CD8-positive, alpha-beta T cell (primary cell): ENCODE measurements at regions of chr19 and their contacts with region 1.

Region 1: GRCh38 chr19:49640113-49640898 is at the start of gene RRAS:
- DNase-seq: peak; percentile 98 to 100 (median 99)
- ATAC-seq: peak; percentile 66
- H3K4me3 ChIP-seq: peak within 1 kb of the TSS; percentile 64 to 75
- H3K4me3 Mint-ChIP-seq: peak within 1 kb of the TSS; percentile 95
- H3K27ac ChIP-seq: peak within 1 kb of the TSS; percentile 64 to 98
- H3K27ac Mint-ChIP-seq: peak within 1 kb of the TSS; percentile 96
- H3K4me1 ChIP-seq: peaks cover 51% of the 10 kb centered on the region
- H3K4me1 Mint-ChIP-seq: peaks cover 58% of the 10 kb centered on the region
- H3K27me3 ChIP-seq: no peaks in the 10 kb centered on the region
- H3K27me3 Mint-ChIP-seq: no peaks in the 10 kb centered on the region
- CTCF ChIP-seq: no peak
- total RNA-seq, gene RRAS: 3.6 to 4.9 TPM

Region 2: DNA sequence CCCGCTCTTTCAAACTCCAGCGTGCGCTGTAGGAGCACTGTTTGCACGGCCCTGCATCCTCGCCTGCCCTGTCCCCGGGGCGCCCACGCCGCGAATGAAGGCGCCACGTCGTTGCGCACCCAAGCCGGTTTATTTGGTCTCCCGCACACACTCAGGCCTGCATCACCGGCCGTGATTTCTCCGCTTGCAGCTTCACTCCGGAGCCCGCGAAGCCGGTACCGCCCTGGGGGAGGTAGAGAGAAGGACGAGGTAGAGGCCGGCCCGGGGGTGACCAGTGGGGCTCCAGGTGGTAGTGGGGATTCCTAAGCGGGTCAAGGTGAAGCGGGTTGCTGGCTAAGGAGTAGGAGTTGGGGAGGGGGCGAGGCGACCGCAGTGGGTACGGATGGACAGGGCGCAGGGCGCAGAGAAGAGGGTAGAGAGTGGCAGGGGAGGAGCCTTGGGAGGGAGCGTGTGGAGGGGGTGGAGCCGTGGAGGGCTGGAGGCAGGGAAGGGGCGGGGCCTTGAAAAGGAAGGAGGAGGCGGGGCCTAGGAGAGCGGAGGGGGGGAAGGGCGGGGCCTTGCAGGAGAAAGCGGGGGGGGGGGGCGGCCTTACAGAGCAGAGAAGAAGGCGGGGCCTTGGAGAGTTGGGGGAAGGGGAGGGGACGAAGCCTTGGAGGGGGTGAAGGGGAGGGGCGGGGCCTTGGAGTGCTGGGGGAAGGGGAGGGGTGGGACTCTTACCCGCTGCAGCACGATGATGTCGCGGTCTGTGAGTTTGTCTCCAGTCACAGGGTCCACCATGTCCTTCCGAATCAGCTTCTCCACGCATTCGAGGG is 84.5 kb before region 1 on chr19:
- CTCF ChIA-PET with region 1: no interaction called
- POLR2A ChIA-PET with region 1: no interaction called
- intact Hi-C with region 1: no loop called
- DNase-seq: peak; percentile 66 to 90 (median 77)
- ATAC-seq: peak; percentile 75
- H3K4me3 ChIP-seq: peak overlapping the region; percentile 59 to 78
- H3K4me3 Mint-ChIP-seq: peak overlapping the region; percentile 58
- H3K27ac ChIP-seq: peak overlapping the region; percentile 28 to 34
- H3K27ac Mint-ChIP-seq: peak overlapping the region; percentile 95
- H3K4me1 ChIP-seq: peaks cover 88% of the 10 kb centered on the region
- H3K4me1 Mint-ChIP-seq: peaks cover 74% of the 10 kb centered on the region
- H3K27me3 ChIP-seq: no peaks in the 10 kb centered on the region
- H3K27me3 Mint-ChIP-seq: no peaks in the 10 kb centered on the region
- CTCF ChIP-seq: no peak

Region 3: GRCh38 chr19:49580264-49581006 is 59.9 kb before region 1 on chr19 and contains the start of gene NOSIP:
- CTCF ChIA-PET with region 1: no interaction called
- POLR2A ChIA-PET with region 1: interaction called, 5 read pairs
- intact Hi-C with region 1: loop called (anchors 1 kb)
- DNase-seq: peak; percentile 93 to 98 (median 97)
- ATAC-seq: peak; percentile 97
- H3K4me3 ChIP-seq: peak within 1 kb of the TSS; percentile 68 to 71
- H3K4me3 Mint-ChIP-seq: peak within 1 kb of the TSS; percentile 95
- H3K27ac ChIP-seq: peak within 1 kb of the TSS; percentile 63 to 66
- H3K27ac Mint-ChIP-seq: peak within 1 kb of the TSS; percentile 94
- H3K4me1 ChIP-seq: peaks cover 22% of the 10 kb centered on the region
- H3K4me1 Mint-ChIP-seq: peaks cover 39% of the 10 kb centered on the region
- H3K27me3 ChIP-seq: no peaks in the 10 kb centered on the region
- H3K27me3 Mint-ChIP-seq: no peaks in the 10 kb centered on the region
- CTCF ChIP-seq: no peak
- total RNA-seq, gene NOSIP: 103 to 110 TPM

Region 4: DNA sequence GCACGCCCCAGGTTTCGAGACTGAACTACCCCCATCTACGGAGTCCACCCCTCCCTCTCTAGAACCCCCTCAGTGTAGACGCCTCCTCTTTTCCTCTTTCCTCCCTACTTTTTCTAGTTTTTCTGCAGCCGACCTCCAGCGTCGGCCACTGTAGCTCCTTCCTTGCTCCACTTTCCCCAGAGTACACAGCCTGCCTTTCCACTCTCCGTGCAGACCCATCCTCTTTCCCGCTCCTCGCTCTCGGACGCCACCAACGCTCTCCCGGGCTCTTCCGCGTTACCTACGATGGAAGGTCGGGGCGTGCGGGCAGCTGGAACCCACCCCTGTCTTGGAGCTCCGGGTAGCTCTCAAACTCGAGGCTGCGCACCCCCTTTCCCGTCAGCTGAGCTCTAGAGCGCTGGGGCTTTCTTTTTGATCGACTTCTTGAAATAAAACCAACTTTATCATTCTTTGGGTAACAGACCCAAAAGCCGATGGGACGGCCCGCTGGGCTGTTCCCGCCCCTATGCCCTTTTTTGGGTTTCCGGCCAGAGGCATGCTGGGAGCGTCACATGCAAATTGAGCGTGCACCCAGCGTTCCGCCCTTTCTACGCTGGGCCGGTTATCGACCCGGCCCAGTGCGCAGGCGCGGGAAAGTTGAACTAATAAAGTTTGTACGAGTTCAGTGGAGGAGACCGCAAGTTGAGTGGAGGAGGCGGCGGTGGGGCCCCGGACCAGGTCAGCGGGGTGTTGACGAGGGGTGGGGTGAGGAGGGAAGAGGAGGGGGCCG is 25.2 kb after region 1 on chr19 and contains the starts of genes BCL2L12 and IRF3:
- CTCF ChIA-PET with region 1: interaction called, 3 read pairs
- POLR2A ChIA-PET with region 1: interaction called, 34 read pairs
- intact Hi-C with region 1: loop called (anchors 1 kb)
- DNase-seq: peak; percentile 98 to 100 (median 99)
- ATAC-seq: peak; percentile 80
- H3K4me3 ChIP-seq: peak within 1 kb of the TSS; percentile 86 to 95
- H3K4me3 Mint-ChIP-seq: peak within 1 kb of the TSS; percentile 99
- H3K27ac ChIP-seq: peak within 1 kb of the TSS; percentile 77 to 93
- H3K27ac Mint-ChIP-seq: peak within 1 kb of the TSS; percentile 99
- H3K4me1 ChIP-seq: peaks cover 29% of the 10 kb centered on the region
- H3K4me1 Mint-ChIP-seq: peaks cover 38% of the 10 kb centered on the region
- H3K27me3 ChIP-seq: no peaks in the 10 kb centered on the region
- H3K27me3 Mint-ChIP-seq: no peaks in the 10 kb centered on the region
- CTCF ChIP-seq: no peak
- total RNA-seq, gene BCL2L12: 13.1 to 14.7 TPM
- total RNA-seq, gene IRF3: 92.0 to 99.5 TPM

Region 5: GRCh38 chr19:49718511-49718910 is 78.2 kb after region 1 on chr19:
- CTCF ChIA-PET with region 1: no interaction called
- POLR2A ChIA-PET with region 1: no interaction called
- intact Hi-C with region 1: loop called in 1 of 2 experiments (anchors 2 kb)
- DNase-seq: no peak
- ATAC-seq: no peak
- H3K4me3 ChIP-seq: no peak overlapping the region
- H3K4me3 Mint-ChIP-seq: peak overlapping the region; percentile 92
- H3K27ac ChIP-seq: no peak overlapping the region
- H3K27ac Mint-ChIP-seq: peak overlapping the region; percentile 14
- H3K4me1 ChIP-seq: peaks cover 4% of the 10 kb centered on the region
- H3K4me1 Mint-ChIP-seq: peaks cover 14% of the 10 kb centered on the region
- H3K27me3 ChIP-seq: no peaks in the 10 kb centered on the region
- H3K27me3 Mint-ChIP-seq: no peaks in the 10 kb centered on the region
- CTCF ChIP-seq: no peak

Region 6: DNA sequence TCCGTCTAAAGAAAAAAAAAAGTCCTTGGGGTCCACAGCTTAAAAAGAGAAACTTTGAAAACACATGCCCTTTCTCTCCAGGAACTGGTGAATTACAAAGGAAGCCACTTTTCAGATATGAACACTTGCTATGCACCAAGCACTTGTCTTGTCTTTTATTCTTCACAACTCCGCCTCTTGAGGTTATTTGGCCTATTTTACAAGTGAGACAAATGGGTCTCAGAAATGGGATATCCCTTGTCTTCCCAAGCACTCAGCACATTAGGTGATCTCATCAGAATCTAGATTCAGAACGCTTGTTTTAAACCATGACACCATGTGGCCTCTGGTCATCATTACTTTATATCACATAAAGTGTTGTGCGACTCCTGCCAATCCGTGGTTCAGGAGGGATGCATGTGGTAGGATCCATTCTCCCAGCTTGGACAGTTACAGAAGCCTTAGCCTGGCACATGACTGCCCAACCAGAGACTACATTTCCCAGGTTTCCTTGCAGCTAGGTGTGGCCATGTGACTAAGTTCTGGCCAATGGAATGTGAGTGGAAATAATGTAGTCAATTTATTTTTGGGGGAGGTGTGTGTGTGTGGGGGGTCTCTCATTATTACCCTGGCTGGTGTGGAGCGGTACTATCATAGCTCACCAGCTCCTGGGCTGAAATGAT is 108.9 kb after region 1 on chr19:
- CTCF ChIA-PET with region 1: no interaction called
- POLR2A ChIA-PET with region 1: no interaction called
- intact Hi-C with region 1: no loop called
- DNase-seq: no peak
- ATAC-seq: no peak
- H3K4me3 ChIP-seq: no peak overlapping the region
- H3K4me3 Mint-ChIP-seq: no peak overlapping the region
- H3K27ac ChIP-seq: no peak overlapping the region
- H3K27ac Mint-ChIP-seq: no peak overlapping the region
- H3K4me1 ChIP-seq: no peaks in the 10 kb centered on the region
- H3K4me1 Mint-ChIP-seq: peaks cover 2% of the 10 kb centered on the region
- H3K27me3 ChIP-seq: no peaks in the 10 kb centered on the region
- H3K27me3 Mint-ChIP-seq: no peaks in the 10 kb centered on the region
- CTCF ChIP-seq: no peak